Naive thymus-derived CD4-positive, alpha-beta T cell (primary cell): ENCODE measurements at regions of chr16 and their contacts with region 1.

Region 1: GRCh38 chr16:72241930-72242329 is 70.0 kb upstream of the PMFBP1 start:
- DNase-seq: no peak
- ATAC-seq: no peak
- H3K4me3 ChIP-seq: no peak overlapping the region
- H3K4me3 Mint-ChIP-seq: no peak overlapping the region
- H3K27ac ChIP-seq: no peak overlapping the region
- H3K27ac Mint-ChIP-seq: no peak overlapping the region
- H3K4me1 ChIP-seq: no peaks in the 10 kb centered on the region
- H3K4me1 Mint-ChIP-seq: peaks cover 0 to 15% (median 5%) of the 10 kb centered on the region in 7 donors
- H3K27me3 ChIP-seq: no peaks in the 10 kb centered on the region
- H3K27me3 Mint-ChIP-seq: peaks cover 0 to 17% (median 9%) of the 10 kb centered on the region in 5 donors

Region 2: GRCh38 chr16:72270531-72270930 is 28.6 kb after region 1 on chr16:
- CTCF ChIA-PET with region 1: no interaction called
- POLR2A ChIA-PET with region 1: no interaction called
- intact Hi-C with region 1: no loop called
- DNase-seq: no peak
- ATAC-seq: no peak
- H3K4me3 ChIP-seq: no peak overlapping the region
- H3K4me3 Mint-ChIP-seq: no peak overlapping the region
- H3K27ac ChIP-seq: no peak overlapping the region
- H3K27ac Mint-ChIP-seq: no peak overlapping the region
- H3K4me1 ChIP-seq: no peaks in the 10 kb centered on the region
- H3K4me1 Mint-ChIP-seq: no peaks in the 10 kb centered on the region
- H3K27me3 ChIP-seq: no peaks in the 10 kb centered on the region
- H3K27me3 Mint-ChIP-seq: peaks cover 0 to 14% (median 3%) of the 10 kb centered on the region in 5 donors

Region 3: GRCh38 chr16:72467157-72467759 is 225.3 kb after region 1 on chr16:
- CTCF ChIA-PET with region 1: no interaction called
- POLR2A ChIA-PET with region 1: no interaction called
- intact Hi-C with region 1: loop called in 1 of 2 experiments (anchors 5 kb)
- DNase-seq: no peak
- ATAC-seq: peak; percentile 37
- H3K4me3 ChIP-seq: no peak overlapping the region
- H3K4me3 Mint-ChIP-seq: no peak overlapping the region
- H3K27ac ChIP-seq: no peak overlapping the region
- H3K27ac Mint-ChIP-seq: no peak overlapping the region
- H3K4me1 ChIP-seq: no peaks in the 10 kb centered on the region
- H3K4me1 Mint-ChIP-seq: peaks cover 0 to 5% (median 0%) of the 10 kb centered on the region in 7 donors
- H3K27me3 ChIP-seq: no peaks in the 10 kb centered on the region
- H3K27me3 Mint-ChIP-seq: peaks cover 0 to 6% (median 0%) of the 10 kb centered on the region in 5 donors

Region 4: DNA sequence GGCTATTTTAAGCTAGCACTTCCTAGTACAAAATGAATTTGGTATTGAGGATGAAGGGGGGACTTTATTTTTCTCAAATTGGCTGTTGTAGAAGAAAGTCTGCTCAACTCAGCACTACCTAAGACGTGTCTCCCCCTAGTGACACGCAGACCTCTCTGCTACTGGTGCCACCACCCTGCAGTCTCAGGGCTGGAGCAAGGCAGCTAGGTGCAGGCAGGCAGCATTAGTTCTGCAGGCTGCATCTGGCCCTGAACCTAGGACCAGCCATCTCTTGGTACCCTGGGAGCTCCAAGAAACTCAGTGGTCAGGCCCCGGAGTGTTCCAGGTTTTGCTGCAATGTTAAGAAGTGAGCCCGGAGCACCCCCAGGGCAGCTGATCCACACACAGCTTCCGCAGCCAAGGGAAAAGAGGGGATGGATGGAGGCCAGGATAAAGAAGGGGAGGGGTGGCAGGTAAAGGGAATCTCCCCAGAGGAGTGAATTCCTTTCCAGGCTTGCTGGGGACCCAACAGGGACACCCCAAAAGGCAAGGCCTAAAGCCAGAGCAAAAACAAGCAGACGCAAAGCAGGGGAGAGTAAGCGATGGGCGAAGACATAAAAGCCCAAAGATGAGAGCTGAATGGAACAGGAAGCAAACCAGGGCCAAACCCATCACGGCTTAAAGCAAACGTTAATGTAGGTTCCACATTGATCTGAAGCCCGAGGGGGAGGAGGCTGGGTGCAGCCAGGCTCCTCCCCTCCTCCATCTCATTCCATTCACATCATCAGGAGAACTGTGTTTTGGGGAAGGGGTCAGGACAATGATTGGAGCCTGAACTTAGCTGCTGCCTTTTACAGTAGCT is 605.5 kb after region 1 on chr16:
- CTCF ChIA-PET with region 1: no interaction called
- POLR2A ChIA-PET with region 1: no interaction called
- intact Hi-C with region 1: loop called in 1 of 2 experiments (anchors 10 kb)
- DNase-seq: no peak
- ATAC-seq: no peak
- H3K4me3 ChIP-seq: no peak overlapping the region
- H3K4me3 Mint-ChIP-seq: no peak overlapping the region
- H3K27ac ChIP-seq: no peak overlapping the region
- H3K27ac Mint-ChIP-seq: no peak overlapping the region
- H3K4me1 ChIP-seq: no peaks in the 10 kb centered on the region
- H3K4me1 Mint-ChIP-seq: peaks cover 9 to 26% (median 13%) of the 10 kb centered on the region in 7 donors
- H3K27me3 ChIP-seq: no peaks in the 10 kb centered on the region
- H3K27me3 Mint-ChIP-seq: peaks cover 6 to 13% (median 10%) of the 10 kb centered on the region in 5 donors

Region 5: DNA sequence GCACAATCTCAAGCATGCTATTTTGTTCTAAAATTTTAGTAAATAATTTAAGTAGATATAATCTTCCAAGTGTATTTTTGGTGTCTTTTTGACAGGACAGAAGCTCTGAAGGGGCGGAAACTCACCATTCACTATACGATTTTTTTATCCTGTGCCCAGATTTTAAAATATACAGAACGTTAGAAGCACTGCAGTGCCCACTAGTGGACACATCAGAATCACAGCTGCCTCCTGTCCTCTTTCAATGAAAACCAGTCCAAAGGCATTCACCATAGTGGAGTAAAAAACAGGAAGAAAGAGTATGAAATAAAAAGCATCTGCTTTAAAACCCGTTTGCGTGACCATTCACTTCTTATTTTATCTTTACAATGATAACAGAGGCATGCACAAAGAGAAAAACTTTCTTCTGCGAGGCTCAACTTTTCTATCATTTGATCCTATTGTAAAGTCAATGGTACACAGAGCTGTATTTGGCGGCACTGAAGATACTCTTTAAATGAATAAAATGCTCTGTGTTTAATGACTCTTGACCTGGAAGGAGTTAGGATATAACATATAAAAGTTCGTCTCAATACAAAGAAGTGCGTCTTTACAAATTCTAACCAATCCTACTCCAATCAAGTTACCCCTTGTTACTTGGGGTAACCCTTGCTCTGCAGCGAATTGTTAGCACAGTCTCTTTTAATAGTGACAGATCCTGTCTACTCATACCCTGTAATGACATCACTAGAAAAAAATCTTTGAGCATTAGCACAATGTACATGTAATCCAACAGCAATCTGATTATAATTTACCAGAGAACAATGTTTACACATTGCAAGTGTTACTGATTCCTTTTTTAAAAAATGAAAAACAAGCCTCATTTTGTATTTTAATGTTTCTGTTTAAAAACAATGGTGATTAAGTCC is 1714.9 kb after region 1 on chr16:
- CTCF ChIA-PET with region 1: no interaction called
- POLR2A ChIA-PET with region 1: no interaction called
- intact Hi-C with region 1: loop called in 1 of 2 experiments (anchors 5 kb)
- DNase-seq: peak in 6 of 9 donors; percentile 1 to 25 (median 10)
- ATAC-seq: peak; percentile 44
- H3K4me3 ChIP-seq: no peak overlapping the region
- H3K4me3 Mint-ChIP-seq: no peak overlapping the region
- H3K27ac ChIP-seq: no peak overlapping the region
- H3K27ac Mint-ChIP-seq: no peak overlapping the region
- H3K4me1 ChIP-seq: no peaks in the 10 kb centered on the region
- H3K4me1 Mint-ChIP-seq: no peaks in the 10 kb centered on the region
- H3K27me3 ChIP-seq: no peaks in the 10 kb centered on the region
- H3K27me3 Mint-ChIP-seq: peaks cover 0 to 20% (median 3%) of the 10 kb centered on the region in 5 donors